HEK293T (cell line): ENCODE measurements at regions of chr5 and their contacts with region 1.

Region 1: DNA sequence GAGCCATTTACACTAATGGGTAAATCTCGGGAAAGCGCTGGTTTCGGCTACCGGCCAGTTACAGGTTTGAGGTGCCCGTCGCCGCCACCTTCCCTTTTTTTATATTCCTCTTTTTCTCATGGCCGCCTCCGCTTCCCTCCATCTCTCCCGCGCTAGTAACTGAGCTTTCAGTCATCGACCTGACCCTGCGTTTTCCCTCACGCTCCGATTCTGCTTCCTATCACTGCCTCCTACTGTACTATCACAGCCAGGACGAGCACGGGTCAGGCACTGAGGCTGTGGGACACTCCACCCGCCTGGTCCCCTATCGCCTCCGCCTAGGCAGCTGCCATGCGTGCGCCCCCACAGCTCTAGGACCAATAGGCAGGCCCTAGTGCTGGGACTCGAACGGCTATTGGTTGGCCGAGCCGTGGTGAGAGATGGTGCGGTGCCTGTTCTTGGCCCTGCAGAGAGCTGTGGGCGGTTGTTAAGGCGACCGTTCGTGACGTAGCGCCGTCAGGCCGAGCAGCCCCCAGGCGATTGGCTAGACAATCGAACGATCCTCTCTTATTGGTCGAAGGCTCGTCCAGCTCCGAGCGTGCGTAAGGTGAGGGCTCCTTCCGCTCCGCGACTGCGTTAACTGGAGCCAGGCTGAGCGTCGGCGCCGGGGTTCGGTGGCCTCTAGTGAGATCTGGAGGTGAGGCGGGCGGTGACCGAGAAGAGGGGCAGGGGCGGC is at the start of gene HMGCR:
- DNase-seq: peak; percentile 91

Region 2: DNA sequence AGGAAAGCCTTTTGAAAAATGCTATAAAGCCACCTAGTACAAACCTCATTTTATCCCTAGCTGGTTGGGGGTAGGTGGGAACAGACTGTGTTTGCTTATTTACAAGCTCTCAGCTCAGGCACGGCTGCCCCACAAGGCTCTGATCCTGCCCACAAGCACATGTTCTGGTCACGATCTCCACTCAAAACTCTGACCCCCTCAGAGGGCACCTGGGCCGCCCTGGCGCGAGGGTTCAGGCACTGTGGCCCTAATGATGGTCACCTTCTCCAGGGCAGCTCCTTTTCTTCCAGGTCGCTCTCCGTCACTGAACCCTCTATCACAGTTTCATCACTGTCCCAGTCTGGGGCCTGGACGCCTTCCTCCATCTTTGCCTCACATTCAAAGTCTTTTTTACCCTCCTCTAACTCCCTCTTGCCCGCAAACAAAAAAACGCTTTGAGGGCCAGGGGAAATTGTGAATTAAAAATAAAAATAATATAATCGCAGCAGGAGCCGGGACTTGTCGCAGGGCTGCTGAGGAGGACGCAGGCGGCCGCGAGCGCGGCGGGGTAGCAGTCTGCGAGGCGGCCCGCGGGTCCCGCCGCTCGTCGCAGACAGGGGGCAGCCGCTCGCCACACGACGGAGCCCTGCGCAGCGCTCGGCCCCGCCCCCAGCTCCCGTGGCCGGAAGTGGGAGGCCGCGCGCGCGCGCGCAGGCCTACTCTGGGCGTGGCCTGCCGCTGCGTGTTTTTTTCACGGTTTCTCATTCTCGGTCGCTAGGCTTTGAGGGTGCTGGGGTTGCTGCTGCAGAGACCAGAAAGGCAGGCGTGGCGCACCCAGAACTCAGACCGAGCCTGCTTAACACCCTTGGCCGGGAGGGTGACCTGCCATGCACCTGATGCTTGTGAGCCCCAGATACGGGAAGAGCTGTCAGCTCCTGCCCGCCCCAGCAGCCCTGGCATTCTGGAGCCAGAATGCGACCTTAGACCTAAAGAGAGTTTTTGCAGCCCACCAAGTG is 100.2 kb before region 1 on chr5 and contains the start of gene ANKRD31:
- CTCF ChIA-PET with region 1: interaction called, 6 read pairs
- POLR2A ChIA-PET with region 1: interaction called, 16 read pairs
- DNase-seq: peak; percentile 92

Region 3: DNA sequence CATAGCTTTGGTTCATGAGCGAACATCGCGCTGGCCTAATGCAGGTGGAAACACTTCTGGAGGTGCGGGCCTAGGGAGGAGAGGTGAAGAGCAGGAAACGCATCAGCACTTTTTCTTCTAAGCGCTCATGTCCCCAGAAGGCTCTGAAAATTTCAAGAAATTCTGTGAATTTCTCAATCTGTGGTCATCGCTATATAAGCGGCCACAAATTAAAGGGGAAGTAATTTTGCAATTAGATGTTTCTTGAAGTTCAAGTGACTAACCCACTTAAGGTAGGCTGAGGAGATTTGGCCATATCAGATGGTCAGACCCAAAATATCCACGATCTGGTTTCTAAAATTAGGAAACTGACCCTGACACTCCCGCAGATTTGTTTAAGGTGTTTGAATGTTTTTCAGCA is 16.4 kb before region 1 on chr5:
- CTCF ChIA-PET with region 1: no interaction called
- POLR2A ChIA-PET with region 1: interaction called, 13 read pairs
- DNase-seq: no peak